ENCODE measurements at regions of chr11 and their contacts with region 1.

Region 1: GRCh38 chr11:111793863-111794262 is 27.7 kb upstream of the PPP2R1B start:
- DNase-seq: peak; percentile 93
- H3K4me3 ChIP-seq: no peak overlapping the region
- H3K27ac ChIP-seq: peak overlapping the region; percentile 37
- H3K4me1 ChIP-seq: peaks cover 33% of the 10 kb centered on the region
- H3K27me3 ChIP-seq: no peaks in the 10 kb centered on the region
- CTCF ChIP-seq: no peak

Region 2: GRCh38 chr11:111770581-111771134 is 23.2 kb before region 1 on chr11:
- CTCF ChIA-PET with region 1: no interaction called
- POLR2A ChIA-PET with region 1: no interaction called
- intact Hi-C with region 1: no loop called
- DNase-seq: no peak
- H3K4me3 ChIP-seq: no peak overlapping the region
- H3K27ac ChIP-seq: no peak overlapping the region
- H3K4me1 ChIP-seq: no peaks in the 10 kb centered on the region
- H3K27me3 ChIP-seq: no peaks in the 10 kb centered on the region
- CTCF ChIP-seq: no peak

Region 3: GRCh38 chr11:111833524-111833923 is 39.7 kb after region 1 on chr11:
- CTCF ChIA-PET with region 1: interaction called, 3 read pairs
- POLR2A ChIA-PET with region 1: no interaction called
- intact Hi-C with region 1: loop called (anchors 5 kb)
- DNase-seq: peak; percentile 62
- H3K4me3 ChIP-seq: no peak overlapping the region
- H3K27ac ChIP-seq: no peak overlapping the region
- H3K4me1 ChIP-seq: peaks cover 14% of the 10 kb centered on the region
- H3K27me3 ChIP-seq: no peaks in the 10 kb centered on the region
- CTCF ChIP-seq: peak; percentile 66

Region 4: DNA sequence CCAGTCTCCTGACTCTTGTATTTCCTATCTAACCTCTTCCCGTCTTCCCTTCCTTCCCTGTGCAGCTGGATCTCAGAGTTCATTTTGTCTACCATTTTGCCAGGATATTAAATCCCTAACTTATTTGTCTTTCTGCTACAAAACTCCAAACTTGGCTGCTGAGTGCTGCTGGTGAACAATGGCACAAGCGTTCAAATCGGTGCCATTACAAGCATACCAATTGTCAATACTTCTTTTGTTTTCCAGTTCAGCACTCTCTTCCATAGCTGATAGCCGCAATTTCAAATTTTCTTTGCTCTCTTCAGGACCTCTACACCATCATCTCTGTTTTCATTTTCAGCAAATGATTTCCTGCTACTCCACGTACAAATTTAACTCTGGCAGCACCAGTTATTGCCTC is 356.7 kb after region 1 on chr11:
- CTCF ChIA-PET with region 1: no interaction called
- POLR2A ChIA-PET with region 1: interaction called, 13 read pairs
- intact Hi-C with region 1: no loop called
- DNase-seq: no peak
- H3K4me3 ChIP-seq: no peak overlapping the region
- H3K27ac ChIP-seq: no peak overlapping the region
- H3K4me1 ChIP-seq: peaks cover 6% of the 10 kb centered on the region
- H3K27me3 ChIP-seq: no peaks in the 10 kb centered on the region
- CTCF ChIP-seq: no peak